AG04449 (cell line): ENCODE measurements at regions of chr1 and their contacts with region 1.

Region 1: DNA sequence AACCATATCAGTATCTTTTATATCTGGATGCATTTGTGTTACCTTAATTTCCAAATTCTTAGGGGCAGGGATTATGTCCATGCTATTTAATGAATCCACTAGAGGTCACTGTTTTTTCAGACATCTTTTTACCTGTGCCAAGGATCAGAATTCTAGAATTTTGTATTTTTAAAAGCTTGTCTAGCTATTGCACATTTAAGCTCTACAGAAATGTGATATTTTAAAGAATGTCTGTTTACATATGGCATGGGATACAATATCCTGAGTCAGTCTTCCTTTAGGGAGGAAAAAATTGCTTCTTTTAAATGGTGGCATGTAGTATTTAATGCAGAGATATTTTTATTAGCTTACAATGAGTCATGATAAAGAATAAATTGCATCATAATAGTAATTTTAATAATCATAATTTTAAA is 11.3 kb downstream of the RPAP2 start:
- DNase-seq: no peak
- H3K4me3 ChIP-seq: no peak overlapping the region
- CTCF ChIP-seq: peak; percentile 25

Region 2: DNA sequence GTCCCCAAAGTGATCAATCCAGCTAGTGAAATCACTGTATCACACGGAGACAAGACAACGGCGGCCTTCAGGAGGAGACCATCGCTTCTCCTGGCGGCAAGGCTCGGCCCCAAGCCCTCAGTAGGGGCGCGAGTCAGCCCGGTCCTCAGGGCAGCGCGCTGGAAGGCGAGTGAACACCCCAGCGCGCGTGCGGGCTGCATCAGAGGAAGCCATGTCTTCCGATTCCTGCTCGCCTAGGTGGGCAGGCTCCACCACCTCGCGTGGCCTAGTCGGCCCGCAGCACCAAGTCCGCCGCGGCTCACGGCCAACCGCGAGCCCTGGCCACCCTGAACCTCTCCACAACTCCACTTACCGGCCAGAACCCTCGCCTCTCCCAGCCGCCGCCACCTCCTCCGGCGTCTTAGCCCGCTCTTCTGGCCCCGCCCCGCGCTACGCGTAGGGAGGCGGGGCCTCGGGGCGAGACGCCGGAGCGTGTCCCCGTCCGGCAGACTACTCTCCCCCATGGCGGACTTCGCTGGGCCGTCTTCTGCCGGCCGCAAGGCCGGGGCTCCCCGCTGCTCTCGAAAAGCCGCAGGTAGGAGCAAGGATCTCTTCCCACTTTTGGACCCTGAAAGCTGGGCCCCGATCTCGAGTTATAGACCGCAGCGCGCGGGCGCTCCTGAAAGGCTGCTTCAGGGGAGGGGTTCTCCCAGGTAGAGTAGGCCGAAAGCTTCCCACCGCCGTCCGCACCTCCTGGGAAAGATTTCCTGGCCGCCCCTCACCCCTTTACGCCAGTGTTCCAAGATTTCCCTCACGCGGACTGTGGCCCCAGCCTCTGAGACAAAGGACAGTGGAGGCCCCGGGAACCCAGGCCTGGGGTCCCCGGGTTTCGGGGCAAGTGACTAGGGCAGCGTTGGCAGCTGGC is 11.4 kb before region 1 on chr1 and contains the starts of genes GLMN and RPAP2:
- CTCF ChIA-PET with region 1: interaction called, 41 read pairs
- POLR2A ChIA-PET with region 1: no interaction called
- DNase-seq: peak; percentile 14
- H3K4me3 ChIP-seq: peak within 1 kb of the TSS; percentile 79
- CTCF ChIP-seq: peak; percentile 20

Region 3: DNA sequence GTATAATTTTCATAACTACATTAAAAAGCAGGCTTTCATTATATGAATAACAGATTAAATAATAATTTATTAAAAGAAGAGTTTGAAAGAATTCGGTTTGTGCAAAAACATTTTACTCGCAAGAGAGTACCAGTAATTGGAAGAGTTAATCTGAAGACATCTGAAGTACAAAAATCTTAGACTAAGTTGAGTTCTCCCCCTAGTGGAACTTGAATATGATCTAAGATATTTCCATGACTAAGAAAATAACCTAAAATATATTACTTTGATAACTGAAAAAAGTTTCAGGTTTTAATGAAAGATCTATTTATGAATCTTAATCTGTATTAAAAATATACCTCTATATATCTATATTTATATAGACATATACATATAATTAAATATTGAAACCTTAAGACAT is 289.0 kb after region 1 on chr1:
- CTCF ChIA-PET with region 1: interaction called, 17 read pairs
- POLR2A ChIA-PET with region 1: no interaction called
- DNase-seq: peak; percentile 4
- H3K4me3 ChIP-seq: no peak overlapping the region
- CTCF ChIP-seq: peak; percentile 10

Region 4: DNA sequence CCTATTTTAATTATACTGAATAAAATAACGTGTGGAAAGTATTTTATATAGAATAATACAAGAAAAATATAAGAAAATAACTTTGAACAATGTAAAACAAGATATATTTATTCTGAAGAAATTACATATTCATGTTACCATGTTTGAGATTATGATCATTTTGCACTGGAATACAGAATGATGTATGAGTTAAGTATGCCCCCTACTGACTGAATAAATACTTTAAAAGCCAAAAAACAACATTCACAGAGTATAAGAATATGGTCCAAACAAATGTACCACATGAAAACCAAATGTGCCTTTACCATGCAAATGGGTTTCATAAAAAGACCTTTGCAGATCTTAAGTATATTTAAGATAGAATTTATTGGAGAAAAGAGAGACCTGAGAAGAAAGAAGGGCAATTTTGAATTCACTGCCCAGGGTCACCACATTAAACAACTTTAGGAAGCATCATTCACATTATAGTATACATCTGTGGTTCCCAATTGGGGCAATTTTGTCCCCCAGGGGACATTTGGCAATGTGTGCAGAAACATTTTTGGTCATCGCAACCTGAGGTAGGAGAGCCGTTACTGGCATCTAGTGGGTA is 313.1 kb after region 1 on chr1:
- CTCF ChIA-PET with region 1: interaction called, 27 read pairs
- POLR2A ChIA-PET with region 1: no interaction called
- DNase-seq: no peak
- H3K4me3 ChIP-seq: no peak overlapping the region
- CTCF ChIP-seq: peak; percentile 11